ENCODE measurements at regions of chr2 and their contacts with region 1.

Region 1: DNA sequence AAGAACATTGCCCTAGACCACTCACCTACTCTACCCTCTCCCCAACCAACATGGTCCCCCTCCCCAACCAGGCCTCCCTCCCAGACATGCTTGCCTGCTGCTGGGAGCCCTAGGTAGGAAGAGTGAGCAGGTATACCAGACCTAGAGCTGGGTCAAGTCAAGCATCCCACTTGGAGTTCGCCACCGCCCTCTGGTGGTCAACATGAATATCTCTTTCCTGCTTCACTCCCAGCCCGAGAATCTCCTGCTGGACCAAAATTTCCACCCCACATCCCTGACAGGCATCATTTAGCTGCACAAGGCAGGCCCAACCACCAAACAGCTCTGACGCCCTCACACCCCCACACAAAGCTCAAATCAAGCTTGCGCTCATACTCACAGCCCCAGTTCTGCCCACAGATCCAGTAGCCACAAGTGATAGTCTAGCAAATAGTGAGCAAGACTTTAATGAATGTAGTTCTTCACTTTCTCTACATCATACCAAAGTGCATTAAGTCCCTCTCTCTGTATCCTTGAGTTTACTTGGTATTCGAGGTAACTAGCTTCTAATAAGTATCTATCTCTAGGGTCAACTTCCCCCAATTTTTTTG is 116.0 kb downstream of the TNS1 start:
- H3K4me3 ChIP-seq: no peak overlapping the region
- H3K27ac ChIP-seq: no peak overlapping the region
- H3K4me1 ChIP-seq: no peaks in the 10 kb centered on the region
- CTCF ChIP-seq: peak; percentile 76

Region 2: DNA sequence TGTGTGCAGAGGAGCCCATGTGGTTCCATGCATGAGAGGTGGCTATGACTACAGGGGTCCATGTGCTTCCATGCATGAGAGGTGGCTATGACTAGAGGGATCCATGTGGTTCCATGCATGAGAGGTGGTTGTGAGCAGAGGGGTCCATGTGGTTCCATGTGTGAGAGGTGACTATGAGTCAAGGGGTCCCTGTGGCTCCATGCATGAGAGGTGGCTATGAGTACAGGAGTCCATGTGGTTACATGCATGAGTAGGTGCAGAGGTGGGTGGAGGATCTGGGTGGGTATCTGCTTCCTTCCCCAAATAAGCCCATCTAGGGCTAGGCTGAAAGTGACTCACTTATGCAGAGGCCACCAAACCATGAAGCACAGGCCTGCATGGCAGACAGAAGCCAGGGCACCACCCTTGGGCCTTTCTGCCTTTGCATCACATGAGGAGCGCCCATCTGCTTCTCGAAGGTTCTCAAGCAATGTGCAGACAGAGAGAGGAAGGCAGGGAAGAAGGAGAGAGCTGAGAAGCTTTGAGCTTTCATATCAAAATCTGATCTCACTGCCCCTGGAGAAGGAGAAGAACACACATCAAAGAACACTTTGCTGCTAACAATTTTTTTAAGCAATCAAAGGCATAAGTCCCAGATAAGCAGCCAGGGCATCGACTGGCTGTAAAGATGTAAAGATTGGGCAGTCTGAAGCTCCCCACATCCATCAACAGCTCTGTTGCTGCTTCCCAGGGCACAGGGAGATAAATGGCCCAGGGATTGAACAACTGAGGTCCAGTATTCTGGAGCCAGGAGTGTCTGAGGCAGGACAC is 21.6 kb before region 1 on chr2:
- CTCF ChIA-PET with region 1: interaction called, 13 read pairs
- POLR2A ChIA-PET with region 1: no interaction called
- H3K4me3 ChIP-seq: no peak overlapping the region
- H3K27ac ChIP-seq: no peak overlapping the region
- H3K4me1 ChIP-seq: no peaks in the 10 kb centered on the region
- CTCF ChIP-seq: no peak

Region 3: DNA sequence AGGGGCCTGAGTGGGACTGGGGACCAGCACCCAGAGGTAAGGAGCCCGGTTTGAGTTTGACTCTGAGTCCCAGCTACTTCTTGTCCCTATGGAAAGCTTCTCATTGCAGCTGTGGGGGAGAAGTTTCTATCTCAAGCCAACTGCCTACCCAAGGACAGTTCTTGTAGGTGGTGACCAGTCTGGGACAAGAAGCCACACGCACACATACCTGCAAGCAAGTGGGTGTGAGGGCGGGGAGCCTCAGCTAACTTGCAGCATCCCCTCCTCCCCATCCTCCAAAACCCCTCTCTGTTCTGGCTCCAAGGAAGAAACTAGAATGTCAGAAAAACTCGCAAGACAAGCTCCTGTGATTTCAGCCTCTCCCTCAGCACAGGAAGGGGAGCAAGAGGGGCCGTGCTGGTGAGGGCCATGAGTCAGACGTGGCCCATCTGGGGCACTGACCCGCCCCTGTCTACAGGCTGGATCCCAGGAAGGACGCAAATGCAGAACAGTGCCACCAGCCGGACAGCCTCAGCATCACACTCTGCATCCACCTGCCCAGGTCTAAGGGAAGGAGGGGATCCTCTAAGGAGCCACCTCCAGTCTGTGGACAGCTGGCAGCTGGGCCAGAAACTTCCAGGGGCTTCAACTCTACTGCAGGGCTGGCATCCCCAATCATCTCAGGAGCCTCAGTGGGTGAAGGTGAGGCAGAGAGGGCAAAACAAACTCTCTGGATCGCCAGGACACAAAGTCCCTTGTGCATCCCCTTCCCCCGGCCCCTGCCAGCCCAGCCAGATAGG is 12.6 kb after region 1 on chr2:
- CTCF ChIA-PET with region 1: interaction called, 41 read pairs
- POLR2A ChIA-PET with region 1: no interaction called
- H3K4me3 ChIP-seq: no peak overlapping the region
- H3K27ac ChIP-seq: no peak overlapping the region
- H3K4me1 ChIP-seq: no peaks in the 10 kb centered on the region
- CTCF ChIP-seq: peak; percentile 47

Region 4: GRCh38 chr2:217988014-217988839 is 101.4 kb after region 1 on chr2:
- CTCF ChIA-PET with region 1: interaction called, 16 read pairs
- POLR2A ChIA-PET with region 1: interaction called, 4 read pairs
- H3K4me3 ChIP-seq: no peak overlapping the region
- H3K27ac ChIP-seq: no peak overlapping the region
- H3K4me1 ChIP-seq: peaks cover 2% of the 10 kb centered on the region; the same call in 1 of the 2 replicates
- CTCF ChIP-seq: peak; percentile 75

Region 5: GRCh38 chr2:218194880-218195279 is 308.1 kb after region 1 on chr2:
- CTCF ChIA-PET with region 1: no interaction called
- POLR2A ChIA-PET with region 1: no interaction called
- H3K4me3 ChIP-seq: no peak overlapping the region
- H3K27ac ChIP-seq: no peak overlapping the region
- H3K4me1 ChIP-seq: no peaks in the 10 kb centered on the region
- CTCF ChIP-seq: no peak

Measured in HEK293 (cell line).